CD8-positive, alpha-beta T cell (primary cell): ENCODE measurements at regions of chr6 and their contacts with region 1.

Region 1: DNA sequence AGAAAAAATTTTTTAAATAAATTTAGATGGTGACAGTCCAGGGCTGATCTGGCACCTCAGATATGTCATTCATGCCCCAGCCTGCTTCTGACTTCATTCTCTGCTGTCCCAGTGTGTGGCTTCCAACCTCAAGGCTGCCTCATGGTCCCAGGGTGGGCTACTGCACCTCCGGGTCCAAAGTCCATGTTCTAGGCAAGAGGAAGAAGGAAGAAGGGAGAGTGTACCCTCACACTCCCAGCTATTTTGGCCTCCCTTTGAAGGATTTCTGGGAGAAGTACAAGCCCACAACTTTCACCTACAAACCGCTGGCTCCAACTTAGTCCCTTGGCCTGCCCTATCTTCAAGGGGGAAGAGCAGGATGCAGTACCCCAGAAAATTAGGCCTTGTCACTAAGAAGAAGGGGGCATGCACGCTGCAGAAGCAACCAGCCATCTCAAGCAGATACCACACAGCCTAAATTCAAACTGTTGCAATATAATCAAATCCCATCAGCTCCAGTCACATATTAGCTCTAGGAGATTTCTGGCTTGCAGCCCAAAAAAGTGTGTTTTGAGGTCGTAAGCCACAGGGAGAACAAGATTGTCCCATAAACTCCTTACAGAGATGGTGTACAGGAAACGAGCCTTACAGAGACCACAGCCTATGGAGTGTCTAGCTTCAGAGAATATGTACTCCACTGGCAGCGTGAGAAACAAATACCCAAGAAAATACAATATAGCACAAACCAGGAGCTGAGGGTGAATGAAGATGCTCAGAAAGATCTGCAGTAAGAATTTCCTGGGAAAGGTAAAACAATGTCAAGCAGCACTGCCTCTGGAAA is 906 bp upstream of the BTN3A2 start:
- DNase-seq: peak in 6 of 9 experiments; percentile 9 to 69 (median 34)
- ATAC-seq: no peak
- H3K4me3 ChIP-seq: peak overlapping the region; percentile 90 to 92
- H3K4me3 Mint-ChIP-seq: no peak overlapping the region
- H3K27ac ChIP-seq: peak overlapping the region; percentile 95
- H3K27ac Mint-ChIP-seq: no peak overlapping the region
- H3K4me1 ChIP-seq: peaks cover 51% of the 10 kb centered on the region
- H3K4me1 Mint-ChIP-seq: peaks cover 53% of the 10 kb centered on the region
- H3K27me3 ChIP-seq: no peaks in the 10 kb centered on the region
- H3K27me3 Mint-ChIP-seq: no peaks in the 10 kb centered on the region
- CTCF ChIP-seq: no peak

Region 2: GRCh38 chr6:26130254-26131249 is 233.5 kb before region 1 on chr6:
- CTCF ChIA-PET with region 1: no interaction called
- POLR2A ChIA-PET with region 1: no interaction called
- intact Hi-C with region 1: no loop called
- DNase-seq: no peak
- ATAC-seq: no peak
- H3K4me3 ChIP-seq: no peak overlapping the region
- H3K4me3 Mint-ChIP-seq: no peak overlapping the region
- H3K27ac ChIP-seq: peak overlapping the region in 1 of 2 experiments; percentile 16
- H3K27ac Mint-ChIP-seq: peak overlapping the region; percentile 47
- H3K4me1 ChIP-seq: peaks cover 34% of the 10 kb centered on the region
- H3K4me1 Mint-ChIP-seq: peaks cover 67% of the 10 kb centered on the region
- H3K27me3 ChIP-seq: no peaks in the 10 kb centered on the region
- H3K27me3 Mint-ChIP-seq: no peaks in the 10 kb centered on the region
- CTCF ChIP-seq: no peak

Region 3: DNA sequence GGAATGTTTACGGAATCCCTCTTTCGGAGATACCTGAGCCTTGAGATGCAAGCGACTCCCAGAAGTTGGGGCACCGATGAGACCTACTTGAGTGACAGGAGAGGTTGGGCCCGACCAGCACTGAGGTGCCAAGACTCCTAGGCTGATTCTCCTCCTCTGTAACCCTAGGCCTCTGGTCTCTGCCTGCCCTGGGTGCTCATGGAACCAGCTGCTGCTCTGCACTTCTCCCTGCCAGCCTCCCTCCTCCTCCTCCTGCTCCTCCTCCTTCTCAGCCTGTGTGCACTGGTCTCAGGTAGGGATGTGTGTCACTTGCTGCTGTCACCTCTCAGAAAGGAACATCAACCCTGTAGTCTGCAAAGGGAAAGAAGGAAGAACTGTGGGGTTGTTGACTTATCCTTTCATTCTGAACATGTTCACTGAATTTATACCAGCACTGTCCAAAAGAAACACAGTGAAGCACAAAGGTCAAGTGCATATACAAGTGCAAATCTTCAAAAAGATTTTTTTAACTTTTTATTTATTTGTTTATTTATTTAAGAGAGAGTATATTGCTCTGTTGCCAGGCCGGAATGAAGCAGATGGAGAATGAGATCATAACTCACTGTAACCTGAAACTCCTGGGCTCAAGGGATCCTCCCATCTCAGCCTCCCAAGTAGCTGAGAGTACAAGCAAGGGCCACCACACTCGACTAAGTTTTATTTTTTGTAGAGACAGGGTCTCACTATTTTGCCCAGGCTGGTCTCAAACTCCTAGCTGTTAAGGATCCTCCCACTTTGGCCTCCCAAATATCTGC is 19.7 kb after region 1 on chr6:
- CTCF ChIA-PET with region 1: no interaction called
- POLR2A ChIA-PET with region 1: interaction called, 4 read pairs
- intact Hi-C with region 1: loop called (anchors 1 to 2 kb)
- DNase-seq: peak in 5 of 9 experiments; percentile 14 to 57 (median 21)
- ATAC-seq: peak; percentile 25
- H3K4me3 ChIP-seq: peak overlapping the region; percentile 94
- H3K4me3 Mint-ChIP-seq: peak overlapping the region; percentile 98
- H3K27ac ChIP-seq: peak overlapping the region; percentile 73 to 91
- H3K27ac Mint-ChIP-seq: peak overlapping the region; percentile 95
- H3K4me1 ChIP-seq: peaks cover 12% of the 10 kb centered on the region
- H3K4me1 Mint-ChIP-seq: peaks cover 44% of the 10 kb centered on the region
- H3K27me3 ChIP-seq: no peaks in the 10 kb centered on the region
- H3K27me3 Mint-ChIP-seq: no peaks in the 10 kb centered on the region
- CTCF ChIP-seq: no peak

Region 4: GRCh38 chr6:27280064-27280539 is 916.0 kb after region 1 on chr6:
- CTCF ChIA-PET with region 1: no interaction called
- POLR2A ChIA-PET with region 1: no interaction called
- intact Hi-C with region 1: no loop called
- DNase-seq: no peak
- ATAC-seq: no peak
- H3K4me3 ChIP-seq: no peak overlapping the region
- H3K4me3 Mint-ChIP-seq: no peak overlapping the region
- H3K27ac ChIP-seq: no peak overlapping the region
- H3K27ac Mint-ChIP-seq: no peak overlapping the region
- H3K4me1 ChIP-seq: no peaks in the 10 kb centered on the region
- H3K4me1 Mint-ChIP-seq: peaks cover 2% of the 10 kb centered on the region
- H3K27me3 ChIP-seq: peaks cover 58 to 81% of the 10 kb centered on the region in 2 experiments
- H3K27me3 Mint-ChIP-seq: peaks cover 84% of the 10 kb centered on the region
- CTCF ChIP-seq: no peak